Activated CD4-positive, alpha-beta T cell treated with anti-CD3 and anti-CD28 coated beads, Interleukin-2, amount 10 ng/mL, durations not matched to agents 24 days and 14 days (primary cell): ENCODE measurements at regions of chr1 and their contacts with region 1.

Region 1: GRCh38 chr1:201149400-201149799 is 4.9 kb downstream of the TMEM9 start:
- DNase-seq: peak; percentile 63
- H3K4me3 Mint-ChIP-seq: no peak overlapping the region
- H3K27ac Mint-ChIP-seq: no peak overlapping the region
- H3K4me1 Mint-ChIP-seq: peaks cover 8% of the 10 kb centered on the region
- H3K27me3 Mint-ChIP-seq: peaks cover 1% of the 10 kb centered on the region

Region 2: DNA sequence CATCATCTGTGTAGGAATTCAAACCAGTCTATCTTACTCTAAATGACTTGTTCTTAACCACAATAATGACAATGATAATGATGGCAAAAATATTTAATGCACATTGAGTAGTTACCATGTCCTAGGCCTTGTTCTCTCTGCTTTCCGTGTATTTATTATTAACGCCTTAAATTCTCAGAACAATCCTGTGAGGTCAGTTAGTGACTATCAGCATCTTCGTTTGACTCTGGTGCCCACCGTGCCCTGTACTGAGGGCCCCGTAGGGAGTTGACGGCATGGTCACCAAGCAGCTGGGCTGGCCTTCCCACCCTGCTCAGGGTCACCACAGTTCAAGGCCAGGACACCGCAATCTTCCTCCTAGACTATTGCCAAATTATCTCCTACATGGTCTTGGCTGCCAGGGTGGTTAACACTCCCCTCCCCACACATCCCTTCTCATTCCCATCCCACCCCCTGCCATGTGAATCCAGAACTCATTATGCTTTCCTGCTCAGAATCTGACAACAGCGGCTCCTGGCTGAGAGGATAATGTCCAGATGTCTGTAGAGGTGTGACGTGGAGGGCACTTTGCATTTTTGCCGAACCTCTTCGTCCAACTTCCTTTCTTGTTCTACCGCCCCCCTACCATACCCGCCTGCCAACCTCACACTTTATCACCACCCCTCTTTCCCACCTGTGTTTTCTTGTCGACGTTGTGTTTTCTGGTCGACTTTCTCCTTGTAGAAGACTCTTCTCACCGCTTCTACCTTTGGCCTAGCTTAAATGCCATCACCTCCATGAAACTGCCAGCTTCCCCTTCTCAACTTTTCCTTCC is 74.7 kb after region 1 on chr1:
- intact Hi-C with region 1: loop called (anchors 1 kb)
- DNase-seq: peak; percentile 41
- H3K4me3 Mint-ChIP-seq: no peak overlapping the region
- H3K27ac Mint-ChIP-seq: no peak overlapping the region
- H3K4me1 Mint-ChIP-seq: no peaks in the 10 kb centered on the region
- H3K27me3 Mint-ChIP-seq: peaks cover 3% of the 10 kb centered on the region

Region 3: GRCh38 chr1:201399352-201400126 is 250.1 kb after region 1 on chr1:
- intact Hi-C with region 1: no loop called
- DNase-seq: no peak
- H3K4me3 Mint-ChIP-seq: no peak overlapping the region
- H3K27ac Mint-ChIP-seq: no peak overlapping the region
- H3K4me1 Mint-ChIP-seq: no peaks in the 10 kb centered on the region
- H3K27me3 Mint-ChIP-seq: peaks cover 22% of the 10 kb centered on the region

Region 4: GRCh38 chr1:202154766-202155477 is 1005.5 kb after region 1 on chr1:
- intact Hi-C with region 1: no loop called
- DNase-seq: peak; percentile 86
- H3K4me3 Mint-ChIP-seq: peak overlapping the region; percentile 63
- H3K27ac Mint-ChIP-seq: peak overlapping the region; percentile 74
- H3K4me1 Mint-ChIP-seq: peaks cover 52% of the 10 kb centered on the region
- H3K27me3 Mint-ChIP-seq: no peaks in the 10 kb centered on the region